ACHN (cell line): ENCODE measurements at regions of chr5 and their contacts with region 1.

Region 1: DNA sequence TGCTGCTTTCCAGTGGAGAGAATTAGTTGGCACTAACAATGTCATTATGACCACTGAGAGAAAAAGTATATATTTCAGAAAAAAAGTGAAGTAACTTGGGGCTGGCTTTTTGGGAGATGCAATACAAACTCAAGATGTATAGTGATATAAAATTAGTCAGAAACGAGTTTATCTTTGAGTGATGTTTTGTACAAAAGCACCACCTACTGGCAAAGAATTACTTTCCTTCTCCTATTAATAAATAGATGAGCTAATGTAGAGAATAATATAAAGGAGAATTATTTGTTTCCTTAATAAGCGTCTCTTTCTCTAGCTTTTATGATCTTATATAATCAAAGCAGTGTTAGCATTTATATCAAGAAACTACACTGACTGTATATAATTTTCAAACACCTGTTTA is 158.8 kb downstream of the MEF2C start:
- DNase-seq: peak; percentile 35

Region 2: DNA sequence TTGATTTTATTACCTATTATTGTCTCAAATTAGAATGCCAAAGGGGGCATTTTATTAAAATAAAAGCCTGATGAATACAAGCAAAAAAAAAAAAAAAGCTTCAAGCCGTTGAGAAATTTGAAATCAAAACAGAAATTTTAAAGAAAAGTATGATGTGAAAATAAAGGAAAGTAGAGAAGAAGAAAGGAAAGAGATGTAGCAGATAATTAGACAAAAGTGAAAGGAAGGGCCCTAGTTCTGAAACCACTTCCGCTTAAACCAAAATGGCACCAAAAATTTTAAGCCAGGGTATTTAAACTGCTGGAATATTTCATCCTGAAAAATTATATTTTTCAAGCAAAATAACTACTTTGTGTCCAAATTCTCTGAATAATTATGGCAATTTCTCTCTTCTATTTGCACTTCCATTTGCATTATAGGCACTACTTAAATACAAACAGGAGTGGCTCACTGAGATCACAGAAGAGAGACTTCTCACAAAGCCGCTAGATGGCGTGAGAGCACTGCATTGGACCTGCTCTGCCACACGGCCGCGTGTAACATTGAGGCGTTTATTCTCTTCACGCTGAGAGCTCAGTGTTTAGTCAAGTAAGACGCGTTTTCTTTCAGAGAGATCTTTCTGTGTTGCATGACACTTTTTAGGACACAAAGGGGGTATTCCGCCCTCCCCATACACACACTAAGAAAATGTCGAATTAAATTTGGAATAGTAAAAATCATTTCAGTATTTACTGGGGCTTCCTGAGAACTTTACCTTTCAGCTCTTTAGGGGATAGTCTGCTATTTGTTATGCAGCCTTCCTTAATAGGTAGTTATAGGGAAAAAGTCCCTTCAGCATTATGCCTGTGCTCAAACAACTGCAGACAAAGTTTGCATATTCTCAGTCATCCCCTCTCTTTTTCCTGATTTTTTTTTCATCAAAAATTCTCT is 943.1 kb before region 1 on chr5:
- in situ Hi-C with region 1: loop called (anchors 25 kb)
- DNase-seq: peak; percentile 76

Region 3: DNA sequence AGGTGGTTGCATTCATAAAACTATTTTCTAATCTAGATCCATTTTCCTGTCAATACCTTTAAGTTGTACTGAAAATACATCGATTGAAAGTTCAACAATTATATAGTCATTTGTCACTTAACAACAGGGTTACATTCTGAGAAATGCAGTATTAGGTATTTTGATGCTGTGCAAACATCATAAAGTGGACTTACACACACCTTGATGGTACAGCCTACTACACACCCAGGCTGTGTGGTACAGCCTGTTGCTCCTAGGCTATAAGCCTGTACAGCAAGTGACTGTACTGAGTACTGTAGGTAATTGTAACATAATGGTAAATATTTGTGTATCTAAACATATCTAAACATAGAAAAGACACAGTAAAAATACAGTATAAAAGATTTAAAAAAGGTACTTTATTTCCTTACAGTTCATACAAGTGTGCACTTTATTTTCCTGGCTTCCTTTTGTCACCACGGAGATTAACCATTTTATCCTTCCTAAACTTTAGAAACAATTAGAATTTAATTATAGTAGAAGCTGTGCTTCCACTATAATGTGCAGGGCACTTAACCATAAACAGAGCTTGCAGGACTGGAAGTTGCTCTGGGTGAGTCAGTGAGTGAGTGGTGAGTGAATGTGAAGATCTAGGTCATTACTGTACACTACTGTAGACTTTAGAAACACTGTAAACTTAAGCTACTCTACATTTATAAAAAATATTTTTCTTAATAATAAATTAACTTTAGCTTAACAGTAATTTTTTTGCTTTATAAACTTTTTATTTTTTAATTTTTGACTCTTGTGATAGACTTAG is 201.7 kb after region 1 on chr5:
- in situ Hi-C with region 1: no loop called
- DNase-seq: no peak